Activated T-helper 2 cell treated with anti-CD3 and anti-CD28 coated beads, Interferon-gamma antibody, Interleukin-2, Interleukin-4, amounts not matched to agents 10 μg/mL and 5 μg/mL and 100 μg/mL, durations not matched to agents 14 hours and 24 hours and 36 hours (primary cell): ENCODE measurements at regions of chr5 and their contacts with region 1.

Region 1: GRCh38 chr5:143355720-143356119 is 47.8 kb downstream of the NR3C1 start:
- DNase-seq: no peak
- H3K4me3 Mint-ChIP-seq: no peak overlapping the region
- H3K27ac Mint-ChIP-seq: no peak overlapping the region
- H3K4me1 Mint-ChIP-seq: peaks cover 55% of the 10 kb centered on the region
- H3K27me3 Mint-ChIP-seq: no peaks in the 10 kb centered on the region

Region 2: GRCh38 chr5:142769741-142770631 is 585.7 kb before region 1 on chr5 and contains the start of gene ARHGAP26:
- intact Hi-C with region 1: no loop called
- DNase-seq: peak; percentile 91
- H3K4me3 Mint-ChIP-seq: peak within 1 kb of the TSS; percentile 91
- H3K27ac Mint-ChIP-seq: peak within 1 kb of the TSS; percentile 89
- H3K4me1 Mint-ChIP-seq: peaks cover 34% of the 10 kb centered on the region
- H3K27me3 Mint-ChIP-seq: no peaks in the 10 kb centered on the region
- total RNA-seq, gene ARHGAP26: 13.6 and 15.1 TPM in 2 replicates

Region 3: GRCh38 chr5:143008809-143009521 is 346.8 kb before region 1 on chr5:
- intact Hi-C with region 1: loop called (anchors 2 kb)
- DNase-seq: peak; percentile 82
- H3K4me3 Mint-ChIP-seq: peak overlapping the region; percentile 9
- H3K27ac Mint-ChIP-seq: peak overlapping the region; percentile 80
- H3K4me1 Mint-ChIP-seq: peaks cover 76% of the 10 kb centered on the region
- H3K27me3 Mint-ChIP-seq: no peaks in the 10 kb centered on the region

Region 4: DNA sequence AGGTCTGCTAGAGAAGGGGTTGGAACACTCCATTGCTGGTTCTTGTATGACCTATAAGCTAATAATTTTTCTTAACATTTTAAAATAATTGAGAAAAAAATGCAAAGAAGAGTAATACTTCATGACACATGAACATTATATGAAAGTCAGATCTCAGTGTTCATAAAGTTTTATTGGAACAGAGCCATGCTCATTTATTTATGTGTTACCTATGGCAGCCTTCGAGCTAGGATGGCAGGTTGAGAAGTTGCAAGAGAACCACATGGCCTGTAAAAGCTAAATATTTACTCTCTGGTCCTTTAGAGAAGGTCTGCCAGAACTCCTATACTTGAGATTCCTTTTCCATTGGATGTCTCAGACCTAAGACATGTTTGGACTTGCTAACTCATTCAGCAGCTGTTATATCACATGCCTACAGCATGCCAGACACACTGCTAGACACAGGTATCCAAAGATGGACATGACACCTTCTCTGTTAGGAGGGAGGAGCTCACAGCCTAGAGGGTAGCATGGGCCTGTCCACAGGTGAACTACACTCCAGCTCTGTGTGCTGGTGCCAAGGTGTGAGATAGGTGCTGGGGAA is 281.2 kb before region 1 on chr5:
- intact Hi-C with region 1: no loop called
- DNase-seq: no peak
- H3K4me3 Mint-ChIP-seq: no peak overlapping the region
- H3K27ac Mint-ChIP-seq: no peak overlapping the region
- H3K4me1 Mint-ChIP-seq: peaks cover 3% of the 10 kb centered on the region
- H3K27me3 Mint-ChIP-seq: no peaks in the 10 kb centered on the region

Region 5: GRCh38 chr5:143124593-143124992 is 231.1 kb before region 1 on chr5:
- intact Hi-C with region 1: loop called (anchors 5 kb)
- DNase-seq: no peak
- H3K4me3 Mint-ChIP-seq: no peak overlapping the region
- H3K27ac Mint-ChIP-seq: peak overlapping the region; percentile 37
- H3K4me1 Mint-ChIP-seq: peaks cover 48% of the 10 kb centered on the region
- H3K27me3 Mint-ChIP-seq: no peaks in the 10 kb centered on the region

Region 6: DNA sequence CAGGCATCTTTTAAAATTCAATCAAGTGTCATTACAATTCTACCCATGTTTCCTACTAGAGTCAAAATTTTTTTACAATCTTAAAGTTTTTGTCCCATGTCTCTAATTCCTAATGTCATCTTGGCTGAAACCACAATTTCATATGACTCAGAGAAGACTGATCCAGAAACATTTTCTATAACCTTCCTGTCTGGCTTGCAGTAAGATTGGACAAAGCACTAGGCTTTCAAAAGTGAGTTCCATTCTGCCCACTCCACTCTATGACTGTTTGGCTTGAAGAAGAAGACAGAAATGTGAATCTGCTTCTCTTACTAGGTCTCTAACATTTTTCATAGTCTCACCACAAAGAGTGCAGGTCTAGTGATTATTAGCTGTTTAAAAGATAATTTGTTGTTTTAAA is 41.1 kb before region 1 on chr5:
- intact Hi-C with region 1: loop called (anchors 5 kb)
- DNase-seq: no peak
- H3K4me3 Mint-ChIP-seq: no peak overlapping the region
- H3K27ac Mint-ChIP-seq: peak overlapping the region; percentile 63
- H3K4me1 Mint-ChIP-seq: peaks cover 32% of the 10 kb centered on the region
- H3K27me3 Mint-ChIP-seq: no peaks in the 10 kb centered on the region

Region 7: GRCh38 chr5:143509758-143510221 is 154.1 kb after region 1 on chr5:
- intact Hi-C with region 1: loop called (anchors 5 kb)
- DNase-seq: no peak
- H3K4me3 Mint-ChIP-seq: no peak overlapping the region
- H3K27ac Mint-ChIP-seq: no peak overlapping the region
- H3K4me1 Mint-ChIP-seq: peaks cover 25% of the 10 kb centered on the region
- H3K27me3 Mint-ChIP-seq: no peaks in the 10 kb centered on the region

Region 8: GRCh38 chr5:143850050-143850683 is 494.4 kb after region 1 on chr5:
- intact Hi-C with region 1: no loop called
- DNase-seq: no peak
- H3K4me3 Mint-ChIP-seq: no peak overlapping the region
- H3K27ac Mint-ChIP-seq: no peak overlapping the region
- H3K4me1 Mint-ChIP-seq: peaks cover 4% of the 10 kb centered on the region
- H3K27me3 Mint-ChIP-seq: peaks cover 4% of the 10 kb centered on the region